ENCODE measurements at regions of chr9 and their contacts with region 1.

Region 1: GRCh38 chr9:79686381-79687130 is 114.8 kb downstream of the TLE4 start:
- DNase-seq: peak in 1 of 2 donors; percentile 62
- ATAC-seq: peak; percentile 80
- H3K4me3 ChIP-seq: no peak overlapping the region
- H3K27ac ChIP-seq: peak overlapping the region in 1 of 2 donors; percentile 91
- H3K4me1 ChIP-seq: peaks cover 4 to 5% of the 10 kb centered on the region in 2 donors
- H3K27me3 ChIP-seq: no peaks in the 10 kb centered on the region

Region 2: DNA sequence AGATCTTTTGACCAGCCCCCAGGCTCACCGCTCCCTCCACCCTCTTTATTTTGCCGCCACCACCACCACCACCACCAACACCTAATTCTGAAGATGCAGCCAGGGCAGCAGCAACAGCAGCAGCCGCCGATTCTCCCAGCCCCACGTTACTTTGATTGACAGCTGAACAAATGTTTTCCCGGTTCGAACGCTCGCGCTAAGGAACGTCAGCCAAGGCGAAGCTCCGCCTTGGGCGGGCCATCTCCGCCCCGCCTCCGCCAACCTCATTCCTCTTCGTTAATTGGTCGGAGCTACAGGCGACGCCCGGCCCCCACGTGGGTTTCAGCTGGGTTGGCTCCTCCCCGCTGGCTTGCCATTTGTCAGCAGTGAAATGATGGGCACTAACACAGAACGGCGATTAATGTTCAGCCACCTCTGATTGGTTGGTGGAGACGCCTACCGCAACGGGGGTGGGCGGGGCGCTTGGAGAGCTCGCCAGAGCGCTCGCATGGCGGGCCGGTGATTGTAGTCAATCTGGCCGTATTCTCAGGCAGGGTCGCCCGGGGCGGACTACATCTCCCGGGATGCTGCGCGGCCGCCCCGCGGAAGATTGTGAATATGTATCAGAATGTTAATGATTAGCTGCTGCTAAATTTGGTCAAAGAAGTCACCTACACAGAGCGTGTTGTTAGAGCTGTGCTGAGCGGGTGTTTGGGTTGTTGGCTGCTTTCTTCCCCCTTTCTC is 115.1 kb before region 1 on chr9 and contains the start of gene TLE4:
- intact Hi-C with region 1: loop called (anchors 5 to 10 kb)
- DNase-seq: peak; percentile 99 to 100
- ATAC-seq: peak; percentile 99
- H3K4me3 ChIP-seq: peak within 1 kb of the TSS; percentile 94 to 95
- H3K27ac ChIP-seq: peak within 1 kb of the TSS; percentile 81 to 95
- H3K4me1 ChIP-seq: no peaks in the 10 kb centered on the region
- H3K27me3 ChIP-seq: no peaks in the 10 kb centered on the region
- total RNA-seq, gene TLE4: 36.7 to 38.3 TPM

Region 3: GRCh38 chr9:80061940-80062339 is 375.4 kb after region 1 on chr9:
- intact Hi-C with region 1: loop called in 1 of 2 experiments (anchors 10 kb)
- DNase-seq: peak in 1 of 2 donors; percentile 48
- ATAC-seq: peak; percentile 81
- H3K4me3 ChIP-seq: no peak overlapping the region
- H3K27ac ChIP-seq: peak overlapping the region; percentile 82 to 95
- H3K4me1 ChIP-seq: peaks cover 4 to 7% of the 10 kb centered on the region in 2 donors
- H3K27me3 ChIP-seq: no peaks in the 10 kb centered on the region

Measured in aorta (tissue), 5 donors.